ENCODE measurements at regions of chr1 and their contacts with region 1.

Region 1: GRCh38 chr1:115186711-115187265 is 97.5 kb upstream of the TSPAN2 start:
- DNase-seq: no peak
- H3K4me3 ChIP-seq: no peak overlapping the region
- H3K27ac ChIP-seq: no peak overlapping the region
- H3K4me1 ChIP-seq: no peaks in the 10 kb centered on the region
- H3K27me3 ChIP-seq: no peaks in the 10 kb centered on the region
- CTCF ChIP-seq: no peak

Region 2: DNA sequence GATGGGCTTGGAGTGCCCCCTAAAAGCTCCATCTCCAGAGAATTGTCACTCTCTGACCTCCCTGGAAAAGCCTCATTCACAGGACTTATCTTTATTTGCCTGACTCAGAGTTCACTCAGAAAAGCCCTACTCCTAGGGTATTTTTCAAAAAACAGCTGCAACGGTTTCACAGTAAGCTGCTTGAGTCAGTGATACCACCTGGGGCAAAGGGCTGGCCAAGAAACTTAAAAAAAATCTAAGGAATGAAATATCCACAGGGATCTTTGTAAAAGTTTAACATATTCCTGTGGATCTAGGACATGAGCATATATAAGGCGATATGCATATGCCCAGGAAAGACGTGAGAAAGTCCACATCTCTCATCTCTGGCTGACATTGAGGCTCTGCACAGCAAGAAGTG is 63.7 kb before region 1 on chr1:
- CTCF ChIA-PET with region 1: no interaction called
- POLR2A ChIA-PET with region 1: interaction called, 20 read pairs
- intact Hi-C with region 1: no loop called
- DNase-seq: no peak
- H3K4me3 ChIP-seq: no peak overlapping the region
- H3K27ac ChIP-seq: no peak overlapping the region
- H3K4me1 ChIP-seq: no peaks in the 10 kb centered on the region
- H3K27me3 ChIP-seq: no peaks in the 10 kb centered on the region
- CTCF ChIP-seq: no peak

Region 3: GRCh38 chr1:115198938-115199337 is 12.2 kb after region 1 on chr1:
- CTCF ChIA-PET with region 1: no interaction called
- POLR2A ChIA-PET with region 1: no interaction called
- intact Hi-C with region 1: no loop called
- DNase-seq: peak; percentile 56
- H3K4me3 ChIP-seq: no peak overlapping the region
- H3K27ac ChIP-seq: no peak overlapping the region
- H3K4me1 ChIP-seq: no peaks in the 10 kb centered on the region
- H3K27me3 ChIP-seq: no peaks in the 10 kb centered on the region
- CTCF ChIP-seq: no peak

Region 4: GRCh38 chr1:115476616-115477015 is 289.8 kb after region 1 on chr1:
- CTCF ChIA-PET with region 1: no interaction called
- POLR2A ChIA-PET with region 1: no interaction called
- intact Hi-C with region 1: no loop called
- DNase-seq: no peak
- H3K4me3 ChIP-seq: no peak overlapping the region
- H3K27ac ChIP-seq: no peak overlapping the region
- H3K4me1 ChIP-seq: no peaks in the 10 kb centered on the region
- H3K27me3 ChIP-seq: peaks cover 48% of the 10 kb centered on the region
- CTCF ChIP-seq: no peak

Measured in A673 (cell line).